ENCODE measurements at regions of chr5 and their contacts with region 1.

Region 1: DNA sequence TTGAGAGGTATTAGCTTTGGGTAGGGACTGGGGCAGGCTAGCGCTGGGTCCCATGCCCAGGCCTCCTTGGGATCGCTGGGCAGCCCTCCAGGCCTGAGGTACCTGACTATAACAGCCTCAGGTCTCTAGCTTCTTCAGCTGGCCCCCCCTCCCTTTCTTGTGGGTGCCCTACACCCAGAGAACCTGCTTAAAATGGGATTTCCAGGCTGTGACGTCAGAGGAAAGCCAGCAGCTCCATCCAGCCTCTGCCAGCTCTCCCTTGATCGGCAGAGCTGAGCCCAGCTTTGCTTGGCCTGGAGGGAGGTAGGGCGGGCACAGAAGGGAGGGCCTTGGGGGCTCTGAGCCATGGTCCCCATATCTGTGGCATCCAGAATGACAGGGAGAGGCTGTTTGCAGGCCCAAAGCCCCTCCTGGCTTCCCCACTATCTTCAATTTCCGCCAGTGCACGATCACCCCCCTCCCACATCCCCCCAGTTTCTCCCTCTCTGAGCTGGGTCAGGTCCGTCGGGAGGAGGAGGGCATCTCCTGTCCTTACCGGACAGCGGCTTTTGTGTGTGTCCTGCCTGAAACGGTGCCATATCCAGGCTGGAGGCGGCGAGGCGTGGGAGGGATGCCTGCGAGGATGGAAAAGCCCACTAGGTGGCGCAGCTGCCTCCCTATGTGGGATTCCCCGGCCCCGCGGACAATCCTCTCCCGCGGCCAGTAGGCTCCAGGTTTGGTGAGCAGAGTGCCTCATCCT is 10.8 kb downstream of the REEP2 start:
- DNase-seq: peak; percentile 95
- H3K4me3 Mint-ChIP-seq: peak overlapping the region; percentile 69
- H3K27ac Mint-ChIP-seq: peak overlapping the region; percentile 53
- H3K4me1 Mint-ChIP-seq: peaks cover 5% of the 10 kb centered on the region
- H3K27me3 Mint-ChIP-seq: no peaks in the 10 kb centered on the region

Region 2: GRCh38 chr5:138408023-138408422 is 41.6 kb before region 1 on chr5:
- intact Hi-C with region 1: no loop called
- DNase-seq: peak; percentile 72
- H3K4me3 Mint-ChIP-seq: no peak overlapping the region
- H3K27ac Mint-ChIP-seq: no peak overlapping the region
- H3K4me1 Mint-ChIP-seq: peaks cover 6% of the 10 kb centered on the region
- H3K27me3 Mint-ChIP-seq: no peaks in the 10 kb centered on the region

Region 3: GRCh38 chr5:138503487-138504270 is 54.0 kb after region 1 on chr5:
- intact Hi-C with region 1: loop called (anchors 1 kb)
- DNase-seq: peak; percentile 78
- H3K4me3 Mint-ChIP-seq: no peak overlapping the region
- H3K27ac Mint-ChIP-seq: no peak overlapping the region
- H3K4me1 Mint-ChIP-seq: no peaks in the 10 kb centered on the region
- H3K27me3 Mint-ChIP-seq: no peaks in the 10 kb centered on the region

Measured in activated CD4-positive, alpha-beta T cell treated with anti-CD3 and anti-CD28 coated beads, Interleukin-2, amount 10 ng/mL, durations not matched to agents 24 days and 14 days (primary cell).